Heart right ventricle (tissue), 16 donors: ENCODE measurements at regions of chr16 and their contacts with region 1.

Region 1: GRCh38 chr16:19907161-19907992 is 22.7 kb upstream of the GPRC5B start:
- DNase-seq: peak; percentile 47 to 62
- ATAC-seq: peak; percentile 83 to 91 (median 89)
- H3K4me3 ChIP-seq: peak overlapping the region in 1 of 10 donors; percentile 15
- H3K27ac ChIP-seq: no peak overlapping the region
- H3K4me1 ChIP-seq: peaks cover 0 to 7% (median 5%) of the 10 kb centered on the region in 9 donors
- H3K27me3 ChIP-seq: peaks cover 0 to 36% (median 17%) of the 10 kb centered on the region in 7 donors
- CTCF ChIP-seq: peak; percentile 88 to 98 (median 95)

Region 2: GRCh38 chr16:19860166-19861041 is 47.0 kb before region 1 on chr16:
- intact Hi-C with region 1: no loop called
- DNase-seq: no peak
- ATAC-seq: no peak
- H3K4me3 ChIP-seq: no peak overlapping the region
- H3K27ac ChIP-seq: peak overlapping the region in 2 of 10 donors; percentile 11 to 17
- H3K4me1 ChIP-seq: peaks cover 0 to 49% (median 23%) of the 10 kb centered on the region in 9 donors
- H3K27me3 ChIP-seq: no peaks in the 10 kb centered on the region
- CTCF ChIP-seq: no peak

Region 3: DNA sequence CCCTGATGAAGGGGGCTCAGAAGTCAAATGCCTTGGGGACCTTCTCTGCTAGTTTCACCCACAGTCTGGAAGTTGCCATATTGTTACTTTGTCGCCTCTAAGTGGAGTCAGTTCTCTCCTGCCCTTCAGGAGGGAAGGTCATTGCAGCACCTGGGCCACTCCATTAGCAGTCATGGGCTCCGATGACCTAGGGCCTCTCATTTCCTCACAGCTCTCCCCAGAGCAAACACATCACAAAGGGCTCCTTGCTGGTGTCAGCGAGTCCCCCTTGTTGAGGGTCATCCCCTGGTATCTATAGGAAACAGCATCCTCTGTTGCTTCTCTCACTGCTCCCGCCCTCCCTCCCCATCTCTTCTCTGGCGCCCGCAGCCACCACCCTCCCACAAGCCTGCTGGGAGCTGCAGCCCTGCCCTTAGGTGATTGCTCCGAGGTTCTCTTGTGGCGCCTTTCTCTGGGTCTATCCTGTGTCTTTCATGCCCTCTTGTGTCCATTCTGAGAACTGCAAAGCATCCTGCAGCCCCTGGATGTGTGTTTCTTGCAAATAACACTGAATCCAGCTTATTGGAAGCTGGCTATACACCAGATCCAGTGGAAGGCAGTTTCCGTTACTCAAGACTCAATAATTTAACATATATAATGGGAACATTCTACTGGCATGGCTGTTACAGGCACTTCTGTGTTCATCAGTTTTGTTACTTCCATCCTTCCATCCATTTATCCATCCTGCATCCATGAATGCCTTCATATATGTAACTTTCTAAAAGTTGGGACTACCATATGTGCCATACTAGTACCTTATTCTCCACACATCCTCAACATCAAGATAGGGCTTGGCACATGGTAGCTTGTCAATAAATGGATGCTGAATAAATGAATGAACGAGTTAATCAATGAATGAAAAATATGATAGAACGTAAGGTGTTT is 476.0 kb after region 1 on chr16:
- intact Hi-C with region 1: loop called (anchors 1 to 5 kb)
- DNase-seq: peak in 1 of 2 donors; percentile 49
- ATAC-seq: peak in 6 of 8 donors; percentile 52 to 80 (median 72)
- H3K4me3 ChIP-seq: no peak overlapping the region
- H3K27ac ChIP-seq: no peak overlapping the region
- H3K4me1 ChIP-seq: peaks cover 0 to 10% (median 0%) of the 10 kb centered on the region in 9 donors
- H3K27me3 ChIP-seq: peaks cover 0 to 29% (median 5%) of the 10 kb centered on the region in 7 donors
- CTCF ChIP-seq: peak; percentile 53 to 83 (median 77)